Heart left ventricle (tissue), 16 donors: ENCODE measurements at regions of chr16 and their contacts with region 1.

Region 1: GRCh38 chr16:87416826-87417527 is 24.8 kb downstream of the MAP1LC3B start:
- DNase-seq: no peak
- ATAC-seq: no peak
- H3K4me3 ChIP-seq: no peak overlapping the region
- H3K27ac ChIP-seq: no peak overlapping the region
- H3K4me1 ChIP-seq: peaks cover 0 to 6% (median 0%) of the 10 kb centered on the region in 12 donors
- H3K27me3 ChIP-seq: no peaks in the 10 kb centered on the region
- CTCF ChIP-seq: peak; percentile 49 to 79 (median 66)
- POLR2A ChIP-seq: no peak

Region 2: GRCh38 chr16:87515475-87516330 is 98.7 kb after region 1 on chr16:
- intact Hi-C with region 1: no loop called
- DNase-seq: no peak
- ATAC-seq: no peak
- H3K4me3 ChIP-seq: no peak overlapping the region
- H3K27ac ChIP-seq: peak overlapping the region in 3 of 12 donors; percentile 92 to 99 (median 94)
- H3K4me1 ChIP-seq: peaks cover 0 to 35% (median 21%) of the 10 kb centered on the region in 12 donors
- H3K27me3 ChIP-seq: no peaks in the 10 kb centered on the region
- CTCF ChIP-seq: no peak
- POLR2A ChIP-seq: no peak

Region 3: GRCh38 chr16:87540945-87541877 is 124.2 kb after region 1 on chr16:
- intact Hi-C with region 1: loop called in 7 of 10 experiments (anchors 5 to 10 kb)
- DNase-seq: peak; percentile 44 to 80 (median 70)
- ATAC-seq: peak; percentile 47 to 79 (median 65)
- H3K4me3 ChIP-seq: peak overlapping the region in 8 of 12 donors; percentile 11 to 48 (median 25)
- H3K27ac ChIP-seq: peak overlapping the region; percentile 34 to 69 (median 56)
- H3K4me1 ChIP-seq: peaks cover 0 to 26% (median 11%) of the 10 kb centered on the region in 12 donors
- H3K27me3 ChIP-seq: peaks cover 0 to 7% (median 0%) of the 10 kb centered on the region in 9 donors
- CTCF ChIP-seq: no peak
- POLR2A ChIP-seq: no peak

Region 4: GRCh38 chr16:87550496-87550961 is 133.6 kb after region 1 on chr16:
- intact Hi-C with region 1: loop called in 5 of 10 experiments (anchors 10 kb)
- DNase-seq: peak; percentile 42 to 78 (median 48)
- ATAC-seq: peak; percentile 33 to 50 (median 48)
- H3K4me3 ChIP-seq: no peak overlapping the region
- H3K27ac ChIP-seq: no peak overlapping the region
- H3K4me1 ChIP-seq: peaks cover 0 to 7% (median 0%) of the 10 kb centered on the region in 12 donors
- H3K27me3 ChIP-seq: peaks cover 0 to 15% (median 0%) of the 10 kb centered on the region in 9 donors
- CTCF ChIP-seq: peak; percentile 80 to 98 (median 92)
- POLR2A ChIP-seq: no peak

Region 5: GRCh38 chr16:87571136-87571867 is 154.3 kb after region 1 on chr16:
- intact Hi-C with region 1: loop called in 2 of 10 experiments (anchors 2 to 5 kb)
- DNase-seq: peak in 3 of 5 donors; percentile 47 to 66 (median 52)
- ATAC-seq: peak; percentile 73 to 90 (median 88)
- H3K4me3 ChIP-seq: no peak overlapping the region
- H3K27ac ChIP-seq: peak overlapping the region in 2 of 12 donors; percentile 12 to 29
- H3K4me1 ChIP-seq: peaks cover 0 to 23% (median 3%) of the 10 kb centered on the region in 12 donors
- H3K27me3 ChIP-seq: peaks cover 0 to 15% (median 5%) of the 10 kb centered on the region in 9 donors
- CTCF ChIP-seq: peak; percentile 21 to 59 (median 42)
- POLR2A ChIP-seq: no peak